OCI-LY7 (cell line): ENCODE measurements at regions of chrX and their contacts with region 1.

Region 1: DNA sequence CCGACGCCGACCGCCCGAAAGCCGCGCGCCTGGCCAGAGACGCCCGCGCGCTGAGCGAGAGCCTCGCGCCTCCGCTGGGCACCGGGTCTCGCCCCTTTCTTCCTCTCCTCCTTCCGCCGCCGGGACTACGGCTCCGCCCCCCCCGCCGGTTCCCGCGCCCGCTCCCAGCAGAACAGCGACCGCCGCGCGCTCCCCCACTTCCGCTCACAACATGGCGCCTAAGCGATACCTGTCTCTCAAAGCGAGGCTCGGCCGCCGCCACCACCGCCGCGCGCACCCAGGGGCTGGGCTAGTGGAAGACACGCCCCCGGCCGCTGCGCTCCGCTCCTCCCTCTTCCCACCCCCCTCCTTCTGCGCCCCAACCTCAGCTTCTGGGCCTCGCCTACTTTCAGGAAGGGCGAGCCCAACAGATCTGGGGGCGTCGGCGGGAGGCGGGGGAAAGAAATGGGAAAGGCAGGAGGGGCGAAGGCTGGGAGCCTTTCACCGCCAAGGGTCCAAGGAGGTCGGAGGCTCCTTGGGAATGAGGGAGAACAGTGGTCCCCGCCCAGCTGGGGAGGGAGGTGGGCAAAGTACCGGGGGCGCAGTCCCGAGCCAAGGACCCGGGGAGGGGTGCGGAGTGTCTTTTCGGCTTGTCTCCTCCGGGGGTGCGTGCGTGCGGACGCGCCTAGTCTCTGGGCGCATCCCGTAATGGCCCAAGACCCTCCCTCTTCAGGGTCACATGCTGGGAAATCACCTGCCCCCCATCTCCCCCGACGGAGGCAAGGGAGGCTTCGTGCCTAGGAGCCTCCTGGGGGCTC is at the start of gene RPS6KA3:
- DNase-seq: peak; percentile 88
- H3K4me3 ChIP-seq: peak within 1 kb of the TSS; percentile 97
- H3K27ac ChIP-seq: peak within 1 kb of the TSS; percentile 37
- H3K4me1 ChIP-seq: peaks cover 28% of the 10 kb centered on the region
- CTCF ChIP-seq: no peak
- total RNA-seq, gene RPS6KA3: 14.2 and 21.6 TPM in 2 replicates

Region 2: DNA sequence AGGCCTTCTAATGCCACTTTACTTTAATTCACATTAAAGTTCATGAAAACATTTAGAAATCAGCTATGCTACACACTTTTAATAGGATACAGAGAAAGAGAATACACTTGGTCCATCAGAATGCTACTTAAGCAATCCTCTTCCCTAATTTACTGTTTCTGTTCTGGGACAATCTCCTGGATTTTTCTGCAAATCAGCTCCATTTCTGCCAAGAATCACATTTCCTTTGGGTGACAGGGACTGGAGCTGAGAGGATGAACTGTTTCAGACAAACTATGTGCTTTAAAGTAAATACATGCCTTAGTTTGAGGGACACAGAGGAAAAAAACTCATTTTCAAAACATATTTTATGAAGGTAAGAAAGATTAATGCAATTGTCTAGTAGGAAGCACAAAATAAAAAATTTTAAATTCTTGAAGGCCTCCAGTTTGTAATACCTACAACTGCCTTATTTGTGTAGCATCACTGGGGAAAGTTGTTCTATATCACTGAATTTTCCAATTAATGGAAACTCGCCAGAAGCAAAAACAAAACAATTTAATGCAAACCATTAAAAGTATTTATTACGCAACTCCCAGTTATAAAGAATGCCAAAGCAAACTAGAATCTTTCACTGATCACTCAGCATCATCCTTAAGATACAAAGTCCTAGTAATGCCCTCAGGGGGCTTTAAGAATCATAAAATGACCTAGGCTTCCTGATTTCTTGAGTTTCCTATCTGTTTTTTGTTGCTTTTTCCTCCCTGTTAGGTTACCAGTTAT is 312.5 kb before region 1 on chrX:
- CTCF ChIA-PET with region 1: no interaction called
- POLR2A ChIA-PET with region 1: no interaction called
- intact Hi-C with region 1: no loop called
- DNase-seq: no peak
- H3K4me3 ChIP-seq: no peak overlapping the region
- H3K27ac ChIP-seq: no peak overlapping the region
- H3K4me1 ChIP-seq: peaks cover 5% of the 10 kb centered on the region
- CTCF ChIP-seq: no peak

Region 3: DNA sequence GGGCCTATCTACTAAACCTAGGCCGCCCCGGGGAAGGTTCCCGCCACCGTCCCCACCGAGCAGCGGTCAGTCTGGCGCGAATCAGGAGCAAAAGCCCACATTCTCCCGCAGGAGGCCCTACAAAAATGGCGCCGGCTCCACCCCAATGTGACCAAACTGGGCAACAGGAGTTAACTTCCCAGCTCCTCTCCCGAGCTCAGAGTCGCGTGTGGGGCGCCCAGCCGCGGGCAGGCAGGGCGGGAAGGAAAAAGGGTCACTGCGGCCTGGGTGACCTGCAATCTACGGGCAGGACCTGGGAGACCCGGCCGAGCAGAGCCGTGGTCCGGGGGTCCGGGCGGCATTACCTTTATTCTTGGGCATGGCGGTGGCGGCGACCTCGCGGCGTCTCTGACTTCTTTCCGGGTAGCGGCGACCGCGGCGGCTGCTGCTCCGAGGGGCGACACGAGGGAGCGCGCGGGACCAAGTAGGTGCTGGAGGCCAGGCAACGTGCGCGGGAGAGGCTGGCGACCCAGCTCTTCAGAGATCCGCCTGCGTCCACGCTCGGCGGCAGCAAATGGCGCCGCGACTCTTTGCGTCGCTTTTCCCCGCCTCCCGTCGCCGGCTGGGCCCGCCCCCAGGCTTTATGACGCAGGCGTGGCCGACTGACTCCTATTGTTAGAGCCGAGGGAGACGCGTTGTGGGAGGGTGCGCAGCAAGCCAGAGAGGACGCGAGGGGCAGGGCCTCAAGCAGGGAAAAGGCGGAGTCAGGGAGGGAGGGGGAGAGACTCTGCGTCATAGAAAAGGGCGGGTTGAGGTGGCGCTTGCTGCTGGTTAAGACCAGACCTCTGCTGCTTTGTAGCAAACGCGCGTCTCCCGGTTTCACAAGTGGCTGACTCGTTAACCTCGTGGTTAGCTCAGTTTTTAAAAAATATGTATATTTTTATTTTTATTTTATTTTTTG is 125.5 kb before region 1 on chrX and contains the start of gene EIF1AX:
- CTCF ChIA-PET with region 1: no interaction called
- POLR2A ChIA-PET with region 1: interaction called, 4 read pairs
- intact Hi-C with region 1: loop called (anchors 5 kb)
- DNase-seq: peak; percentile 95
- H3K4me3 ChIP-seq: peak within 1 kb of the TSS; percentile 100
- H3K27ac ChIP-seq: peak within 1 kb of the TSS; percentile 51
- H3K4me1 ChIP-seq: peaks cover 13% of the 10 kb centered on the region
- CTCF ChIP-seq: no peak
- total RNA-seq, gene EIF1AX: 27.3 and 27.5 TPM in 2 replicates

Region 4: DNA sequence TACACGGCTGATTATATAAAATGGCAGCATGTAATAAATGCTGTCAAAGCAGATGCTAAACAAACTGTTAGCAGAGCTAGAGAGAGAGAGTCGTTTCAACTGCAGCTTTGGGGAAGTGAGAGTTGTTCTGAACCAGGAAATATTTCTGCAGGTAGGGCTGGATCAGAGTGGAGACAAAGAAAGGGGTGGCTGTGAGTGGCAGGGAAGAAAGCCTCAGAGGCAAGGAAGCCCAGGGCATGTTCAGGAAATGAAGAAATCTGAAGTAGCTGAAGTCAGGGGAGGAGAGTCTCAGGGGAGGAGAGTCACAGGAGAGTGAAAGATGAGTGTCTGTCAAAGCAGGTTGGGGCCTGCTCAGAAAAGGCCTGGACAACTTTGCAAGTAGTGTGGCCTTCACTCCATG is 48.1 kb after region 1 on chrX:
- CTCF ChIA-PET with region 1: no interaction called
- POLR2A ChIA-PET with region 1: interaction called, 3 read pairs
- intact Hi-C with region 1: loop called (anchors 2 kb)
- DNase-seq: peak; percentile 75
- H3K4me3 ChIP-seq: no peak overlapping the region
- H3K27ac ChIP-seq: peak overlapping the region; percentile 76
- H3K4me1 ChIP-seq: peaks cover 56% of the 10 kb centered on the region
- CTCF ChIP-seq: no peak

Region 5: DNA sequence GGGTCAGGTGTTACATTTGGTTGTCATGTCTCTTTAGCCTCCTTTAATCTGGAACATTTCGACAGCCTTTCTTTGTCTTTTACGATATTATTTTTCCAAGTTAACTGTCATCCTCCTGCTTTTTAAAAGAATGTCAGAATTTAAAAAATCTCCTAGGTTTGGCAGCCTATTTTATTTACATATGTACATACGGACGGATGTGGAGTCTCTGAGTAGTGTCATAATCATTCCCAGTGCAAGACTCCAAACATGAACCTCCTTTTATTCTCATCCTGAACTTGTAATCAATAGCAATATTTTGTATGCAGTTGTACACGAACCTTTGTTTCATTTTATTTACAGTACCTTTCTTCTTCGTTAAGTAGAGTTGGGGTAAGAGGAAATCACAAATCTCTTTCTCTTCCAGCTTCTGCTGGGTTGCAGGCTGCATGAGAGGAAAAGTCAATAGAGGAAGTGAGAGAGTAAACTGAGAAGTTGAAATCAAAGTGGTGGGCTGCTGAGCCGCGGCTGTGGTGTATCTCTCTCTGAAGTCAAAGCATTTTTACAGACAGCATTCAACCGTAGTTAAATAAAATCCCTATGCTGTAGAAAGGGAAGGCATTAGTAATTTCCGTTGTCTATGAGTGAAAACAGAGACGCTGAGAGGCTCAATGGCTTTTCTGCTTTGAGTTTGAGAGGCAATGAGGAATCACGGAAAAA is 53.6 kb after region 1 on chrX:
- CTCF ChIA-PET with region 1: interaction called, 3 read pairs
- POLR2A ChIA-PET with region 1: interaction called, 3 read pairs
- intact Hi-C with region 1: loop called (anchors 2 kb)
- DNase-seq: peak; percentile 76
- H3K4me3 ChIP-seq: peak overlapping the region; percentile 40
- H3K27ac ChIP-seq: peak overlapping the region; percentile 73
- H3K4me1 ChIP-seq: peaks cover 28% of the 10 kb centered on the region
- CTCF ChIP-seq: no peak